ENCODE measurements at regions of chr11 and their contacts with region 1.

Region 1: DNA sequence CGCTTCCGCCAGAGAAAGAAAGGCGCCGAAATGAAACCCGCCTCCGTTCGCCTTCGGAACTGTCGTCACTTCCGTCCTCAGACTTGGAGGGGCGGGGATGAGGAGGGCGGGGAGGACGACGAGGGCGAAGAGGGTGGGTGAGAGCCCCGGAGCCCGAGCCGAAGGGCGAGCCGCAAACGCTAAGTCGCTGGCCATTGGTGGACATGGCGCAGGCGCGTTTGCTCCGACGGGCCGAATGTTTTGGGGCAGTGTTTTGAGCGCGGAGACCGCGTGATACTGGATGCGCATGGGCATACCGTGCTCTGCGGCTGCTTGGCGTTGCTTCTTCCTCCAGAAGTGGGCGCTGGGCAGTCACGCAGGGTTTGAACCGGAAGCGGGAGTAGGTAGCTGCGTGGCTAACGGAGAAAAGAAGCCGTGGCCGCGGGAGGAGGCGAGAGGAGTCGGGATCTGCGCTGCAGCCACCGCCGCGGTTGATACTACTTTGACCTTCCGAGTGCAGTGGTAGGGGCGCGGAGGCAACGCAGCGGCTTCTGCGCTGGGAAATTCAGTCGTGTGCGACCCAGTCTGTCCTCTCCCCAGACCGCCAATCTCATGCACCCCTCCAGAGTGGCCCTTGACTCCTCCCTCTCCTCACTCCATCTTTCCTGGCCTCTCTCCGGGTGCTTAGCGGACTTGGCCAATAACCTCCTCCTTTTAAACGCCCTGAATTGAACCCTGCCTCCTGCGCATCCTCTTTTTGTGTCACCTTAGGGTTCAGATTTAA is at the start of gene ATM:
- DNase-seq: peak; percentile 99
- H3K4me3 Mint-ChIP-seq: no peak within 1 kb of the TSS
- H3K27ac Mint-ChIP-seq: no peak within 1 kb of the TSS
- H3K4me1 Mint-ChIP-seq: peaks cover 34% of the 10 kb centered on the region
- H3K27me3 Mint-ChIP-seq: no peaks in the 10 kb centered on the region
- total RNA-seq, gene ATM: 29.5 to 30.6 TPM

Region 2: DNA sequence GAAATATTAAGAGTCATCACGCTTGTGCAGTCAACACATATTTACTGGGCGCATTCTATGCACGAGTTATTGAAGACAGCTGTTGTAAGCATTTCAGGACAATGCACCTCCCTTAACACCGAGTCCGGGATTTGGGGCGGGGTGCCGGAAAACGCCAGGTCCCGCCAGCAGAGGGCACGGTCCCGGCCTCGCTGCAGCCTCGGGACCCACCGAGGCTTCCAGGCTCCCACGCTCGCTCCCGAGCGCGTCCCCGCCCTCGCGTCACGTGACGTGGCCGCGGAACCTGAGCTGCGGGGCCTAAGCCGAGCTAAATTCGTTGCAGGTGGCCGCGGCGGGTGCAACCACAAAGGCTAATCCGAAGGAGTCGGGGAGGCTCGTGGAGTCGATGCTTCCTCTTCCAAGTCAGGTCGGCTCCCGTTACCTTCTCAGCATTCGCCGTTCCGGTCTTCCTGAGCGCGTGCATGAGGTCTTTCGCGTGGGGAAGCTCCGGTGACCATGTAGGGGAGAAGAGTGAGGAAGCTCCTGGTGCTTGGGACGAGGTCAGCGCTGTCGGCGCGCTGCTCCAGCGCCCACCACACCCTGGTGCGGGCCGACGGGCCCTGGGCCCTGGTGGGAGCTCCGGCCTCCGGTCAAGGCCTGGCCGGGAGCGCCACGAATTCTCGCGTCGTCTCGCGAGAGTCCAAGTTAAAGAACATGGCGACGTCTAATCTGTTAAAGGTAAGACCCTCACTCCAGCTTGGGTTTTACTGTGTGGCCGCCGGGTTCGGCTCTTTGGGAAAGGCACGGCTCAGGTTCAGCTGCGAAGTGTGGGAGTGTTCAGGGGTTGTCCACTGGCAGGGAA is 214.0 kb before region 1 on chr11 and contains the start of gene CUL5:
- CTCF ChIA-PET with region 1: no interaction called
- intact Hi-C with region 1: loop called (anchors 2 kb)
- DNase-seq: peak; percentile 92
- H3K4me3 Mint-ChIP-seq: peak within 1 kb of the TSS; percentile 93
- H3K27ac Mint-ChIP-seq: peak within 1 kb of the TSS; percentile 76
- H3K4me1 Mint-ChIP-seq: peaks cover 15% of the 10 kb centered on the region
- H3K27me3 Mint-ChIP-seq: no peaks in the 10 kb centered on the region
- total RNA-seq, gene CUL5: 25.9 to 26.2 TPM

Region 3: DNA sequence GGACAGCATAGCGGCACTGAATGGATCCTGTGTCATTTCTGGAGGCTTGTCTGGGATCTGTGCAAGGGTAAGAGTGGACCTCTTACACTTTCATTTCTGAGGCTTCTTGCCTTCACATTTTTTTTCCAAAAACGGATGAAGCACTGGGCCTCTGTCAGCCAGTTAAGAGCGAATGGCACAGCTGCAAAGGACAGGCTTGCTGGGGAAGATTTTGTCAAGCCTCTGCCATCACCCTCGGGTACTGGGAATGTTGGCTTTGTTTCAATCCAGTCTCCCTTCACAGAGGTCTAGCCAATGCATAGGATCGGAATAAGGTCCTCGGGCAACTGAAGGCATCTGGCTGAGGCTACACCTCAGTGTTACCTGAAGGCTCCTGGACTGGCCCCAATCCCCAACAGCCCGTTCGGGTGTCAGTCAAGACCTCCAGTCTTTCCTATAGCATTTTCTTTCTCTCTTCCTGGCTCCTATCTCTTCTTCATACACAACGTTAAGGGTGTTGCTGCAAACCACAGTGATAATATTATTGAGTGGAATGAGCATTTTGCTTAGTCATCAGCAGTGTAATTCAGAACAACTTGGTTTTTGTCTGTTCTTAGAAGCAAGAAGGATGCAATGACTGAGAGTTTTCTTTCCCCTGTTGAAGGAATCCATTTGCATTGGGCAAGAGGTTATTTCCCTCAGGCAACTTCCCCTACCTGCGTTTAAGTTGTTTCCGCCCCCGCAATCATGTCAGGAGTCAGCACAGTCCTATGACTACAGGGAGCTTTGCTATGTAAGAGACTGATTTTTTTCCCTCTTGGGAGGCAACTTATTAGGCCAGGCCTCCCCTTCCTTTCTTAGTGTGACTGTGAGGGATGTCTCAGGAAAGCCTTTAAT is 23.2 kb before region 1 on chr11:
- CTCF ChIA-PET with region 1: no interaction called
- intact Hi-C with region 1: loop called (anchors 1 kb)
- DNase-seq: peak; percentile 94
- H3K4me3 Mint-ChIP-seq: no peak overlapping the region
- H3K27ac Mint-ChIP-seq: peak overlapping the region; percentile 48
- H3K4me1 Mint-ChIP-seq: peaks cover 86% of the 10 kb centered on the region
- H3K27me3 Mint-ChIP-seq: no peaks in the 10 kb centered on the region

Region 4: GRCh38 chr11:108289699-108290098 is 66.8 kb after region 1 on chr11:
- CTCF ChIA-PET with region 1: interaction called, 3 read pairs
- intact Hi-C with region 1: loop called (anchors 1 kb)
- DNase-seq: no peak
- H3K4me3 Mint-ChIP-seq: no peak overlapping the region
- H3K27ac Mint-ChIP-seq: no peak overlapping the region
- H3K4me1 Mint-ChIP-seq: peaks cover 35% of the 10 kb centered on the region
- H3K27me3 Mint-ChIP-seq: no peaks in the 10 kb centered on the region

Region 5: DNA sequence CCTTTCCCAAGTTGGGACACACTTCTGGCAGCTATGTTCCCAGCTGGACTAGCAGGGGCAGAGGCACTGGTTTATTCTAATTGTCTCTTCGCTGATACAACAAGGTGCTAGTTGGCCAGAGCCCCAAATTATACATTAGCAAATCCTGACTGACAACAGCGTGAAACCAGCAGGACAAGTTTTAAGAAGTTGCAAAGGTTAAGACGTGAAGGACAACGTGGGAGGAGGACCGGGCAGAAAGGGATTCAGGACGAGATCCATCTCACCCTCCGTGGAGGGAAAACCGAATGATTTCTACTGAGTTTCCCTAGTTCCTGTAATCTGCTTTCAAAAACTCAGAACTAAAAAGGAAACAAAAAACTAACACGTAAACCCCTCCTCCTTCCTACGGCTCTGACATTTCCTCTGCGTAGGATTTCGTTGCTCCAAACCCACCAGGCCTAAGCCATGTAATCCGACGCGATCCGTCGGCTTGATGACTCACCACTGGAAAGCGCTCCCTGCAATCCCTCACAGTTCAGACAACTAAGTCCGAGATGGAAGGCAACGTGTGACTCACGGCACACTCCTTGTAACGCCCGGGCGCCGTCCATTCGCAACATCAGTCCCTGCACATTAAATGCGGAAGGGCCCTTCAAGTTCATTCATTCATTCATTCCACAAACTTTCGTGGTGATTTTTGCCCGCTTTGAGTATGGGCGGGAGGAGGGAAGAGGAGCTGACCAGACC is 274.6 kb after region 1 on chr11:
- CTCF ChIA-PET with region 1: no interaction called
- intact Hi-C with region 1: loop called (anchors 1 kb)
- DNase-seq: peak; percentile 84
- H3K4me3 Mint-ChIP-seq: peak overlapping the region; percentile 85
- H3K27ac Mint-ChIP-seq: peak overlapping the region; percentile 92
- H3K4me1 Mint-ChIP-seq: peaks cover 16% of the 10 kb centered on the region
- H3K27me3 Mint-ChIP-seq: no peaks in the 10 kb centered on the region

Region 6: GRCh38 chr11:108664730-108665525 is 442.1 kb after region 1 on chr11 and contains the start of gene DDX10:
- CTCF ChIA-PET with region 1: no interaction called
- intact Hi-C with region 1: loop called (anchors 1 kb)
- DNase-seq: peak; percentile 99
- H3K4me3 Mint-ChIP-seq: peak within 1 kb of the TSS; percentile 99
- H3K27ac Mint-ChIP-seq: peak within 1 kb of the TSS; percentile 86
- H3K4me1 Mint-ChIP-seq: peaks cover 38% of the 10 kb centered on the region
- H3K27me3 Mint-ChIP-seq: no peaks in the 10 kb centered on the region
- total RNA-seq, gene DDX10: 36.6 to 43.0 TPM

Measured in activated naive CD4-positive, alpha-beta T cell treated with anti-CD3 and anti-CD28 coated beads for 36 hours (primary cell).